ENCODE measurements at regions of chr3 and their contacts with region 1.

Region 1: DNA sequence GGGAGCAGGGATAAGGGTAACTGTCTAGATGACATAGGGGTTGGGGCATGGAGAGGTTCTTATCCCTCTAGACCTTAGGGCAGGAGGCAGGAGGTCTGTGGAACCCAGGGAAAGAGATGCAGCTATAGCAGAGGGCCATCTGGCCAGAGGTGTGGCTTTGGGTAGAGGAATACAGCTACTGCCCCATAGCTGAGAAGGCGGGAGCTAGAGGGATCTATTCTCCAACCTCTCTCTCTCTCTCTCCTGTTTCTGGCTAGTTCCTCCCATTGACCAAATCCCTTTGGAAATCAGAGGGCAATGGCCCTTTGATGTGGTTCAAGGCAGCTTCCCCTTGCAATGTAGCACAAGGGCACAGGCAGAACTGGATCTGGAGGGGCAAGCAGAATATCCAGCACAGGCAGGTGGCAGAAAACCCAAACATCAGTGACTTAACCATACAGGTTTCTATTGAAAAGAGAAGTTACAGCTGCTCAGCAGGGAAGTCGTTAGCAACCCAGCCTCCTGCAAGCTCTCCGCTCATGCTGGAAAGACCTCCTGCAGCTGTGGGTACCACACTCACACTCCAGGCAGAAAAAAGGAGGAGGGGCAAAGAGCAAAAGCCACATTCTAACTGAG is 22.3 kb upstream of the LMOD3 start:
- DNase-seq: peak; percentile 51
- ATAC-seq: peak; percentile 89
- H3K4me3 Mint-ChIP-seq: no peak overlapping the region
- H3K27ac Mint-ChIP-seq: no peak overlapping the region
- H3K4me1 Mint-ChIP-seq: peaks cover 12% of the 10 kb centered on the region
- H3K27me3 Mint-ChIP-seq: peaks cover 83% of the 10 kb centered on the region
- CTCF ChIP-seq: no peak

Region 2: GRCh38 chr3:69120879-69121464 is 23.8 kb before region 1 on chr3:
- CTCF ChIA-PET with region 1: interaction called, 17 read pairs
- POLR2A ChIA-PET with region 1: no interaction called
- DNase-seq: peak; percentile 90
- ATAC-seq: peak; percentile 74
- H3K4me3 Mint-ChIP-seq: no peak overlapping the region
- H3K27ac Mint-ChIP-seq: no peak overlapping the region
- H3K4me1 Mint-ChIP-seq: peaks cover 8% of the 10 kb centered on the region; the same call in 1 of the 2 replicates
- H3K27me3 Mint-ChIP-seq: no peaks in the 10 kb centered on the region
- CTCF ChIP-seq: peak; percentile 94

Region 3: DNA sequence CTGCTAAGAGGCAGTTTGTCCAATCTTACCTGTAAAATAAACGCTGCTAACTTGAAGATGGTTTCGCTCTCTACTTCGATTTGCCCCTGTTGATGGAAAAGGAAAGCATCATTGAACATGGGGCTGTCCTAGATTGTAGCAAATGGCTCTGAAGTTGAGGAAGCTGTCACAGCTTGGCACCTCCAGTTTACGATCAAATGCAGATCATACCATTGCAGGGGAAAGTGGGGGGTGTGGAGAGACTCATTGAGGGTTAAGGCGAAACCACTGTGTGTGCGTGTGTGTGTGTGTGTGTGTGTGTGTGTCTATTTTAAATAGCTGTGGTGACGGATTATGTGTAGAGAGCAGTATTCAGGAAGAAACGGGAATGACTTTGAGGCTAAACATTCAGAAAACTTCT is 105.3 kb after region 1 on chr3:
- CTCF ChIA-PET with region 1: no interaction called
- POLR2A ChIA-PET with region 1: no interaction called
- DNase-seq: peak; percentile 65
- ATAC-seq: peak; percentile 89
- H3K4me3 Mint-ChIP-seq: peak overlapping the region; percentile 43; the same call in 1 of the 2 replicates
- H3K27ac Mint-ChIP-seq: 0 out of 2 replicates have a peak overlapping the region, but pooled peaks have one; percentile 75
- H3K4me1 Mint-ChIP-seq: peaks cover 38% of the 10 kb centered on the region
- H3K27me3 Mint-ChIP-seq: peaks cover 72% of the 10 kb centered on the region
- CTCF ChIP-seq: no peak